T-cell (primary cell): ENCODE measurements at regions of chr4 and their contacts with region 1.

Region 1: GRCh38 chr4:153466081-153466948 is at the start of gene TMEM131L:
- DNase-seq: peak; percentile 47 to 90 (median 65)
- ATAC-seq: peak; percentile 80 to 83 (median 83)
- H3K4me3 ChIP-seq: peak within 1 kb of the TSS; percentile 95 to 97
- H3K4me3 Mint-ChIP-seq: peak within 1 kb of the TSS; percentile 94 to 96 (median 94)
- H3K27ac ChIP-seq: peak within 1 kb of the TSS; percentile 88
- H3K27ac Mint-ChIP-seq: peak within 1 kb of the TSS; percentile 92 to 97
- H3K4me1 ChIP-seq: peaks cover 29 to 30% of the 10 kb centered on the region in 2 experiments
- H3K4me1 Mint-ChIP-seq: peaks cover 37 to 45% (median 43%) of the 10 kb centered on the region in 3 donors
- H3K27me3 ChIP-seq: no peaks in the 10 kb centered on the region
- H3K27me3 Mint-ChIP-seq: no peaks in the 10 kb centered on the region
- total RNA-seq, gene TMEM131L: 60.7 to 115 (median 72.6) TPM

Region 2: GRCh38 chr4:153488006-153488891 is 21.9 kb after region 1 on chr4:
- CTCF ChIA-PET with region 1: interaction called, 3 to 12 read pairs
- POLR2A ChIA-PET with region 1: interaction called, 4 to 5 read pairs
- DNase-seq: peak; percentile 42 to 90 (median 81)
- ATAC-seq: peak; percentile 66 to 86 (median 67)
- H3K4me3 ChIP-seq: peak overlapping the region; percentile 51 to 70
- H3K4me3 Mint-ChIP-seq: peak overlapping the region; percentile 75 to 79 (median 76)
- H3K27ac ChIP-seq: peak overlapping the region; percentile 95
- H3K27ac Mint-ChIP-seq: peak overlapping the region; percentile 96 to 98
- H3K4me1 ChIP-seq: peaks cover 64 to 68% of the 10 kb centered on the region in 2 experiments
- H3K4me1 Mint-ChIP-seq: peaks cover 87 to 89% (median 88%) of the 10 kb centered on the region in 3 donors
- H3K27me3 ChIP-seq: no peaks in the 10 kb centered on the region
- H3K27me3 Mint-ChIP-seq: no peaks in the 10 kb centered on the region